ENCODE measurements at regions of chr15 and their contacts with region 1.

Region 1: GRCh38 chr15:38699633-38700230 is 135.1 kb upstream of the RASGRP1 start:
- DNase-seq: no peak
- H3K4me3 ChIP-seq: no peak overlapping the region
- H3K27ac ChIP-seq: no peak overlapping the region
- H3K4me1 ChIP-seq: peaks cover 0 to 39% (median 19%) of the 10 kb centered on the region in 6 donors
- H3K27me3 ChIP-seq: no peaks in the 10 kb centered on the region
- CTCF ChIP-seq: peak; percentile 66 to 90 (median 84)
- POLR2A ChIP-seq: no peak

Region 2: DNA sequence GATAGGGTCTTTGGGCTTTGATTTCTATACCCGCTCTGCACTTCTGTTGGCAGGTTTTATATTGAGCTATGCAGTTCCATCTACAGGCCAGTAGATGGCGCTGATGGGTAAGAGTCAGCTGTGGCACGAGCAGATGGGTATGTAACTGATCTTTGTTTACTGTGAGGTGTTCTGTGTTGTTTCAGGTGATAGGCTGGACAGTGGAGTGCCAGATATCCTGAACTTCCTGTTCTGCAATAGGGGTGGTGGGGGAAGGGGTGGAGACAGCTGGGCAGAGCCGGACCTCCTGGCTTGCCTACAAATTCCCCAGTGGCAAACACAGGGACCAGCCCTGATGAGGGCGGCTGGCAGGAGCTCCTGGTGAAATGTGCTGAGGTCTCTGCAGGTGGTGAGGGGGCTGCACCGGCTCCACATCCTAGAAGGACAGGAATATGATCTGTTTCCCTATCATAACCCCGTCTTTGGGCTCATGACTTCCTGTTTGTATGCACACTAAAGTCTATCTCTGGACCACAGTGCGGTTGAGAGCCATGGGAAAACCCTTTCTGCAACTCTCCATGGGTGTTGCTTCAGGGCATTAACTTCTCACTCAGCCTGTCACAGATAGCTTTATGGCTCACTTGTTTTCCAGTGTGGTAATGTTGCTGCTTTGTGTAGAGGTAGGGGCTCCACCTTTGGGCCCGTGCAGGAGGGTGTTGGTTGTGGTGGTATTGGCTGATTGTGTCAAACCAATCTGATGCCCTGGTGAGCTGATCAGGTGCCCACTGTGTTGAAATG is 259.2 kb before region 1 on chr15:
- intact Hi-C with region 1: loop called (anchors 10 kb)
- DNase-seq: peak; percentile 72
- H3K4me3 ChIP-seq: no peak overlapping the region
- H3K27ac ChIP-seq: no peak overlapping the region
- H3K4me1 ChIP-seq: peaks cover 0 to 10% (median 7%) of the 10 kb centered on the region in 6 donors
- H3K27me3 ChIP-seq: peaks cover 0 to 13% (median 0%) of the 10 kb centered on the region in 7 donors
- CTCF ChIP-seq: peak; percentile 74 to 95 (median 89)
- POLR2A ChIP-seq: no peak

Region 3: DNA sequence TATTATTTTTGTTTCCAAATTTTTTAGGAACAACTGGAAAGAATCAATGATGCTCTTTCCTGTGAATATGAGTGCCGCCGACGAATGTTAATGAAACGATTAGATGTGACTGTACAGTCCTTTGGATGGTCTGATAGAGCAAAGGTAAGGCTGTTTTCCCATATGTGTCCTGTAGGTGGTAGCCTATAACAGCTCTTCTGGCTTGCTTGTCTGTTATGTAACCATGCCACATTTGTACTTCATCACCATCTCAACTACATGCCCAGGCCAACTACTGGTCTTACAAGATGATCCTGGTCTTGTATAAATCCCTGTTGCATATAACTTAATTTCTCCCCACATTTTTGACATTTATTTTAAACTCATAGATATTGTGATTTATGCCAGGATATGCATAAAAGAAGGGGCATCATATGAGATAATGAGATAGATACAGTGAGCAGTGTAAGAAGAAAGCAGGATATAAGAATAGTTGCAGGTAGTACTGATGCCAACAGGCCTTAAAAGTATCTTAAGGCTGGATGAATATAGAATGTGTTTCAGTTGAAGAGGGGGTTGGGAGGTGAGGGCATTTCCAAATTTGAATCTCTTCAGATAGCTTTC is 225.5 kb before region 1 on chr15:
- intact Hi-C with region 1: loop called (anchors 10 kb)
- DNase-seq: no peak
- H3K4me3 ChIP-seq: no peak overlapping the region
- H3K27ac ChIP-seq: no peak overlapping the region
- H3K4me1 ChIP-seq: peaks cover 0 to 7% (median 0%) of the 10 kb centered on the region in 6 donors
- H3K27me3 ChIP-seq: no peaks in the 10 kb centered on the region
- CTCF ChIP-seq: peak; percentile 59 to 82 (median 73)
- POLR2A ChIP-seq: no peak